HEK293T (cell line): ENCODE measurements at regions of chr12 and their contacts with region 1.

Region 1: DNA sequence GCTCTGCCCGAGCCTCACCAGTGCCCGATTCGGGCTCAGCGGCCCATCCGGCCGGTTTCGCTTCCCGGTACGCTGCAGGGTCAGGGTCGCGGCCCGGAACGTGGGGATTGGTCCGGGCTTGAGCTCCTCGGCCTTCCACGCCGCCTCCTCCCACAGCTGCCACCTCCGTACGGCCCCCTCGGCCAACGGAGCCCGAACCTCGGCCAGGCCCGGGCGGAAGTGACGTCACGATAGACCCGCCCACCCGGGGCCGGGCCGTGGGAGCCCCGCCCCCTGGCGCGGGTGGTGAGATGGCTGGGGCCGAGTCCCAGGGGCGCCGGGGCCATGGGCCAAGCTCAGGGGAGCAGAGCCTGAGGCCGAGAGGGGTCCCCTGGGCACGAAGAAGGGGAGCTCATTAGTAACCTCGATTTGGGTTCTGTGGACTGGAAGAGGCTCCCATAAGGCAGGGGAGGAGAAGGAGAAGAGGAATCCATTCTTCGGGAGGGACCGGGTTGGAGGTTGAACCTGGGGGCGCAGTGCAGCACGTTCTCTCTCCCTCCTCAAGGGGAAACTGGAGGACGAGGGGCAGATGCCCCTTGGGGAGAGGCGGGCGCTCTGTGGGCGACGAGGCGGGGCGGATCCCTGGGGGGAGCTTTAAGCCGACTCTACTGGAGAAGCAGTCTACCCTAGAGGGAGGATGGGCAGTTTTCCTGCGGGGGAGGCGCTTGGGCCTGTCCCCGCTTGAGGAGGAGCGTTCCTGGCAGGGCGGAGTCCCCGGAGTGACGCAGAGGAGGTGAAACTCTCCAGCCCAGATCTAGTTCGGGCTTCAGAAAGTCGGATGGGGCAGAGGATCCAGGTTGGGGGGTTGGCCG is at the start of gene MLF2:
- DNase-seq: peak; percentile 98

Region 2: DNA sequence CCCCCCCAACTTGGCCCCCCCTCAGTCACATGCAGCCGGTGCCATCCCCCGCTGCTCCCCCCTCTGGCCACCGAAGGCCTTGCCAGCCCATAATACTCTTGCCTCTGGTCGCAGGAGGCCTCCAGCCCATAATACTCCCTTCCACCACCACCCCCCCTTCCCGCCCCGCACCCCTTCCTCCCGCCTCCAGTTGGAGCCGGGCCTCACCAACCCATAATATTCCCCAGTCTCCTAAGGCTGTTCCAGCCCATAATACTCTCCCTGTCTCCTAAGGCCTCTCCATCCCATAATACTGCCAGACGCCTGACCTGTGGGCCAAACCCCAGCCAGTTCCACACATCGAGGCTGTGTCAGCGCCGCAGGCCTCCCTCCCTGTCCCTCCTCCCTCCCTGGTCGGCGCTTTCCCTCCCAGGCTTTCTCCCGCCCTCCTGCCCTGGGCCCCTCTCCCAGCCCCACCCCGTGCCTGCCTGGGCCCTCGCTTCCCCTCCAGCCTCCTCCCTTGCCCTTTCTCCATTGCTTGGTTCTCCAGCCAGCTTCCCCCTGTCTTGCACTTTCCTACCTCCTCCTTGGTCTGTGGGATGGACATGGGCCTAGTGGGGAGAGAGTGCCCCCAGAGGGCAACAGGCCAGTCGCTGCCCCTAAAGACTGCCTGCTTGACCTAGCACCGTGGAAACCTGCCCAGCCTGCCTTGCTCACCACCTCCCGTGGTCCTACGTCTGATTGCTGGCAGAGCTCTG is 139.2 kb before region 1 on chr12:
- CTCF ChIA-PET with region 1: interaction called, 4 read pairs
- POLR2A ChIA-PET with region 1: interaction called, 10 read pairs
- DNase-seq: peak; percentile 87

Region 3: DNA sequence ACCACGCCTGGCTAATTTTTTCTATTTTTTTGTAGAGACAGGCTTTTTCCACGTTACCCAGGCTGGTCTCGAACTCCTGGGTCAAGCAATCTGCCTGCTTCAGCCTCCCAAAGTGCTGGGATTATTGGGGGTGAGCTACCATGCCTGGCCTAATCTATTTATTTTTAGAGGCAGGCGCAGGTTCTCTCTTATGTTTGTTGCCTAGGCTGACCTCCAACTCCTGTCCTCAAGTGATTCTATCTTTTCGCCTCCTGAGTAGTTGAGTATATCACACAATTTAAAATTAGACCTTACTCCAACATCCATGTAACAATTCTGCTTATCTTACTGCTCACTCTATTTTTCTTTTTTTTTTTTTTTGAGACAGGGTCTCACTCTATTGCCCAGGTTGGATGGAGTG is 99.2 kb before region 1 on chr12:
- CTCF ChIA-PET with region 1: no interaction called
- POLR2A ChIA-PET with region 1: no interaction called
- DNase-seq: no peak

Region 4: GRCh38 chr12:6735448-6736191 is 17.5 kb before region 1 on chr12:
- CTCF ChIA-PET with region 1: interaction called, 7 read pairs
- POLR2A ChIA-PET with region 1: interaction called, 18 read pairs
- DNase-seq: peak; percentile 63

Region 5: DNA sequence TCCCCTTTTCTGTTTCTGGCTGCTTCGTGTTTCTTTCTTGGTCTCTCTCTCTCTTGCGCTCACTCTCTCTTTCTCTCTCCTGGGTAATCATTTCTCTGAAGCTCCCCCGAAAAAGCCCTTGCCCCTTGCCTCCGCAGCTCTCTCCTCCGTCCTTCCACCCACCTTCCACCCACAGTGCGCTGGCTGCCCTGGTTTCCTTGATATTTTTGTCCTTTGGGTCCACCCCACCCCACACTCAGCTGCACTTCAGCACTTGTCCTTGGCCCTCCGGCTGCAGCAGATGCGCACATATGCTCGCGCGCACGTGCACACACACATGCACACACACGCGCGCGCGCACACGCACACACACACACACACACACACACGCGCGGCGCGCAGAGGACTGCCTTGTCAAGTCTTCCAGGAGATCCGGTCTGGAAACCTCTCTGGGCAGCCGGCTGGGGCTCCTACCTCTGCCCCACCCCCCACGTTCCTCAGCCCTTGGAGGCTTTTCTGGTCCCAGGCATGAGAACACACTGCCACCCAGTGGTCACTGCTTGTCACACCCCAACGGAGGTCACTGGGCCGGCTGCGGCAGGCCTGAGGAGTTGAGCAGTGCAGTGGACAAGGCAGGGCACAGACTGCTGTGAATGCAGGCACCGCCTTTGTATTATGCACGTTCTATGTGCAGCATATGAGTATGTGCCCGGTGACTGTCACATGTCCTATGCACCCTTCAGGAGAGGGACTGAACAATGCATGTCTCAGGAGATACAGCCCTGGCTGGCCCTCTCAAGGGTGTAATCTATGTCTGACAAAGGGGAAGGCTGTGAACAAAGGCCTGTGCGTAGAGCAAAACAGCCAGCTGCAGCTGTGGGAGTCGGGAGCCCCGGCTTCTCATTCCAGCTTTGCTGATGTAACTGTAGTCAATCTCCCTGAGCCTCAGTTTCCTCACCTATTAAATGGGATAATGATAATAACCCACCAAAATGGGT is 25.7 kb after region 1 on chr12:
- CTCF ChIA-PET with region 1: interaction called, 25 read pairs
- POLR2A ChIA-PET with region 1: interaction called, 40 read pairs
- DNase-seq: peak; percentile 87

Region 6: DNA sequence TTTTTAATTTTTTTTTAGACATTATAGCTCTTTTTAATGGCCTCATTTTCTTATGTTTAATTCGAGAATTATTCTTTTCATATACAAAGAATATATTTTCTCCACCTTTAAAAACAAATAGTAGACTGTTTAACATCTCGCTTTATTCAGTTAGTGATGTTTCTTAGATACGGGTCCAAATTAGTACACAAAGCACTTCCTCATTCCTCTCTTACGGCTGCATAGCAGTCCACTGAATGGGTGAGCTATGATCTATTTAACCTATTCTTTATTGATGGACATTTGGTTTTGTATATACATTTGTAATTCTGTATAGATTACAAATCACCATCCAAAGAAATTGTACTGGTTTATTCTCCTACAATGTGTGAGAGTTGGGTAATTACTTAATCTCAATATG is 60.2 kb after region 1 on chr12:
- CTCF ChIA-PET with region 1: interaction called, 3 read pairs
- POLR2A ChIA-PET with region 1: interaction called, 13 read pairs
- DNase-seq: no peak

Region 7: DNA sequence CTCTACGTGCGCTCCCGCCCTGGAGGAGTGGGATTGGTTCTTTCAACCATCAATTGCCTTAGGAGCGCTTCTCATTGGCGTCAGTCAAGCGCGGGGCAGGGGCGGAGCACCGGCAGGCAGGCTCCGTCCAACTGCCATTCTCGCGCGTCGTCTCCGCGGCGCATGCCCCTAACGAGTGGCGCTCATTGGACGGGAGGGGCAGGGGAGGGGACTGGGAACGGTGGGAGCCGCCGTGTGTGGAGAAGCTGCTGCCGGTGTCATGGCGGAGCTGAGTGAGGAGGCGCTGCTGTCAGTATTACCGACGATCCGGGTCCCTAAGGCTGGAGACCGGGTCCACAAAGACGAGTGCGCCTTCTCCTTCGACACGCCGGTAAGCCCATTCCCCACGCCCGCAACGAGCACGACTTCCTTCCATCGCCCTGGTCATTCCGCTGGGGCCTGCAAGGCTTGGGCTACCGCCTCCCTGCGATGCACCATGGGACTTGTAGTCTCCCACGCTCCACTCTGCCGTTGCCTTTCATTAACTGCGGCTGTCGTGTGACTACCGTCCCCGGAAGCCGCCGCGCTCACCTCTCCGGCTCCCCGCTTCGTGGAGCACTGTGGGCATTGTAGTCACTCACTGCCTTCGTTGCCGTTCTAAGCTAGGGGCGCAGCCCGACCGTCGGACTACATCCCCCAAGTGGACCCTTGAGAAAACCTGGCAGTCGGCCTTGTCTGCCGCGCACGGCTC is 98.9 kb after region 1 on chr12 and contains the start of gene USP5:
- CTCF ChIA-PET with region 1: interaction called, 5 read pairs
- POLR2A ChIA-PET with region 1: interaction called, 51 read pairs
- DNase-seq: peak; percentile 94

Region 8: DNA sequence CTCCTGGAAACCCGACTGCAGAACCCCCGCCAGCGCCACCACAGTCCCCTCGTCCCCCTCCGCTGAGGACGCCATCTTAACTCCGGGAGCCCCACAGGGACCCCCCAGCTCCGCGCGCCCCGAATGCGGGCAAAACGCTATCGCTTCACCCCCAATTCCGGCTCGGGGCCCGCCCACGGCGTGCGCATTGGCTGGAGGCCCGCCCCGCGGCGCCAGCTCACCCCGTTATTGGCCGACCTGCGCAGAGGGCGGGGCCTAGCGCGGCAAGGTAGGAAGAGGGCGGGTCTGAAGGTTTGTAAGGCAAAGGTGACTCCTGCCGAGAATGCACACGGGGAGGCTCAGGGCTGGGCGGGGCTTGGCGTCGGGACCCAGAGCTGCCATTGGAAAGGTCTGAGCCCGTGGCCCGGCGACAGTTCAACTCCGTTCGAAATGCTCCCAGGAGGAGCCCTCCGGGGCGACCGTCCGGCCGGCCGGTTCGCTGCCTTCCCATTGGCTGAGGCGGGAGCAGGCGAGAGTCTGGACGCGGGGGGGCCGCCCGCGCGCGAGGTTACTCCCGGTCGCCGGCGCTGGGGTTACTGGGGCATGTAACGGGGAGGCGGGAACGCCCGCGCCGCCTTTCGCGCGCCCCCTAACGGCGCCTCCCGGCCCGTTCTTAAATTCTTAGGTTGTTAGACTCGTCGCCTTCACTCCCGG is 265.4 kb after region 1 on chr12 and contains the start of gene LPCAT3:
- CTCF ChIA-PET with region 1: no interaction called
- POLR2A ChIA-PET with region 1: no interaction called
- DNase-seq: peak; percentile 93

Region 9: DNA sequence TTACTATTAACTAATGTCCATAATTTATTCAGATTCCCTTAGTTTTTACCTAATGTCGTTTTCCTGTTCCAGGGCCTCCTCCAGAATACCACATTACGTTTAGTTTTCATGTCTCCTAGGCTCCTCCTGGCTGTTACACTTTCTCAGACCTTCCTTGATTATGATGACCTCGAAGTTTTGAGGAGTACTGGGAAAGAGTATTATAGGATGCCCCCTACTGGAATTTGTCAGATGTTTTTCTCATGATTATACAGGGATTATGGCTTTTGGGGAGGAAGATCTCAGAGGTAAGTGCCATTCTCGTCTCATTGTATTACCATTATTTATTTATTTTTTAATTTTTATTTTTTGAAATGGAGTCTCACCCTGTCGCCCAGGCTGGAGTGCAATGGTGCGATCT is 289.7 kb after region 1 on chr12:
- CTCF ChIA-PET with region 1: no interaction called
- POLR2A ChIA-PET with region 1: no interaction called
- DNase-seq: peak; percentile 55